ENCODE measurements at regions of chr5 and their contacts with region 1.

Region 1: GRCh38 chr5:65190328-65191053 is 291.2 kb downstream of the ADAMTS6 start:
- DNase-seq: no peak
- H3K4me3 ChIP-seq: no peak overlapping the region
- H3K27ac ChIP-seq: peak overlapping the region; percentile 50 to 74
- H3K4me1 ChIP-seq: no peaks in the 10 kb centered on the region
- H3K27me3 ChIP-seq: no peaks in the 10 kb centered on the region
- CTCF ChIP-seq: no peak

Region 2: GRCh38 chr5:64595031-64595855 is 595.2 kb before region 1 on chr5:
- intact Hi-C with region 1: loop called (anchors 5 kb)
- DNase-seq: no peak
- H3K4me3 ChIP-seq: no peak overlapping the region
- H3K27ac ChIP-seq: peak overlapping the region; percentile 6 to 59
- H3K4me1 ChIP-seq: peaks cover 0 to 6% of the 10 kb centered on the region in 2 donors
- H3K27me3 ChIP-seq: no peaks in the 10 kb centered on the region
- CTCF ChIP-seq: peak; percentile 35 to 69 (median 43)